Caco-2 (cell line): ENCODE measurements at regions of chr1 and their contacts with region 1.

Region 1: GRCh38 chr1:64539781-64540218 is 69.9 kb downstream of the CACHD1 start:
- DNase-seq: no peak
- H3K4me3 ChIP-seq: no peak overlapping the region
- H3K4me3 Mint-ChIP-seq: no peak overlapping the region
- H3K27ac Mint-ChIP-seq: no peak overlapping the region
- H3K4me1 ChIP-seq: peaks cover 15% of the 10 kb centered on the region; the same call in 1 of the 2 replicates
- H3K4me1 Mint-ChIP-seq: peaks cover 13% of the 10 kb centered on the region
- H3K27me3 ChIP-seq: no peaks in the 10 kb centered on the region
- H3K27me3 Mint-ChIP-seq: no peaks in the 10 kb centered on the region
- CTCF ChIP-seq: no peak

Region 2: GRCh38 chr1:64514197-64514765 is 25.5 kb before region 1 on chr1:
- CTCF ChIA-PET with region 1: interaction called, 3 read pairs
- POLR2A ChIA-PET with region 1: no interaction called
- intact Hi-C with region 1: loop called (anchors 1 kb)
- DNase-seq: peak; percentile 46 to 49
- H3K4me3 ChIP-seq: no peak overlapping the region
- H3K4me3 Mint-ChIP-seq: peak overlapping the region; percentile 9
- H3K27ac Mint-ChIP-seq: peak overlapping the region; percentile 48
- H3K4me1 ChIP-seq: peaks cover 29% of the 10 kb centered on the region
- H3K4me1 Mint-ChIP-seq: peaks cover 14% of the 10 kb centered on the region
- H3K27me3 ChIP-seq: no peaks in the 10 kb centered on the region
- H3K27me3 Mint-ChIP-seq: no peaks in the 10 kb centered on the region
- CTCF ChIP-seq: no peak

Region 3: GRCh38 chr1:64569411-64569810 is 29.6 kb after region 1 on chr1:
- CTCF ChIA-PET with region 1: no interaction called
- POLR2A ChIA-PET with region 1: no interaction called
- intact Hi-C with region 1: loop called (anchors 1 kb)
- DNase-seq: no peak
- H3K4me3 ChIP-seq: no peak overlapping the region
- H3K4me3 Mint-ChIP-seq: no peak overlapping the region
- H3K27ac Mint-ChIP-seq: no peak overlapping the region
- H3K4me1 ChIP-seq: peaks cover 16% of the 10 kb centered on the region
- H3K4me1 Mint-ChIP-seq: peaks cover 26% of the 10 kb centered on the region
- H3K27me3 ChIP-seq: no peaks in the 10 kb centered on the region
- H3K27me3 Mint-ChIP-seq: no peaks in the 10 kb centered on the region
- CTCF ChIP-seq: no peak

Region 4: GRCh38 chr1:64598100-64598571 is 58.3 kb after region 1 on chr1:
- CTCF ChIA-PET with region 1: no interaction called
- POLR2A ChIA-PET with region 1: no interaction called
- intact Hi-C with region 1: loop called (anchors 1 kb)
- DNase-seq: peak; percentile 30 to 62
- H3K4me3 ChIP-seq: peak overlapping the region; percentile 5; the same call in 1 of the 2 replicates
- H3K4me3 Mint-ChIP-seq: peak overlapping the region; percentile 50
- H3K27ac Mint-ChIP-seq: peak overlapping the region; percentile 91
- H3K4me1 ChIP-seq: peaks cover 46% of the 10 kb centered on the region
- H3K4me1 Mint-ChIP-seq: peaks cover 46% of the 10 kb centered on the region
- H3K27me3 ChIP-seq: no peaks in the 10 kb centered on the region
- H3K27me3 Mint-ChIP-seq: no peaks in the 10 kb centered on the region
- CTCF ChIP-seq: no peak

Region 5: GRCh38 chr1:64823691-64824476 is 284.1 kb after region 1 on chr1:
- CTCF ChIA-PET with region 1: no interaction called
- POLR2A ChIA-PET with region 1: no interaction called
- intact Hi-C with region 1: loop called (anchors 10 kb)
- DNase-seq: peak; percentile 56 to 60
- H3K4me3 ChIP-seq: no peak overlapping the region
- H3K4me3 Mint-ChIP-seq: no peak overlapping the region
- H3K27ac Mint-ChIP-seq: no peak overlapping the region
- H3K4me1 ChIP-seq: no peaks in the 10 kb centered on the region
- H3K4me1 Mint-ChIP-seq: peaks cover 12% of the 10 kb centered on the region
- H3K27me3 ChIP-seq: no peaks in the 10 kb centered on the region
- H3K27me3 Mint-ChIP-seq: no peaks in the 10 kb centered on the region
- CTCF ChIP-seq: peak; percentile 41 to 60